CD4-positive, alpha-beta T cell (primary cell): ENCODE measurements at regions of chr17 and their contacts with region 1.

Region 1: GRCh38 chr17:4709794-4710692 is at the start of gene ARRB2:
- DNase-seq: peak; percentile 97 to 100 (median 99)
- ATAC-seq: peak; percentile 79
- H3K4me3 ChIP-seq: peak within 1 kb of the TSS; percentile 90
- H3K4me3 Mint-ChIP-seq: peak within 1 kb of the TSS; percentile 98
- H3K27ac ChIP-seq: peak within 1 kb of the TSS; percentile 82 to 92
- H3K27ac Mint-ChIP-seq: peak within 1 kb of the TSS; percentile 83
- H3K4me1 ChIP-seq: peaks cover 52% of the 10 kb centered on the region
- H3K4me1 Mint-ChIP-seq: peaks cover 59% of the 10 kb centered on the region
- H3K27me3 ChIP-seq: no peaks in the 10 kb centered on the region
- H3K27me3 Mint-ChIP-seq: no peaks in the 10 kb centered on the region
- CTCF ChIP-seq: peak; percentile 86
- total RNA-seq, gene ARRB2: 210 to 220 TPM

Region 2: DNA sequence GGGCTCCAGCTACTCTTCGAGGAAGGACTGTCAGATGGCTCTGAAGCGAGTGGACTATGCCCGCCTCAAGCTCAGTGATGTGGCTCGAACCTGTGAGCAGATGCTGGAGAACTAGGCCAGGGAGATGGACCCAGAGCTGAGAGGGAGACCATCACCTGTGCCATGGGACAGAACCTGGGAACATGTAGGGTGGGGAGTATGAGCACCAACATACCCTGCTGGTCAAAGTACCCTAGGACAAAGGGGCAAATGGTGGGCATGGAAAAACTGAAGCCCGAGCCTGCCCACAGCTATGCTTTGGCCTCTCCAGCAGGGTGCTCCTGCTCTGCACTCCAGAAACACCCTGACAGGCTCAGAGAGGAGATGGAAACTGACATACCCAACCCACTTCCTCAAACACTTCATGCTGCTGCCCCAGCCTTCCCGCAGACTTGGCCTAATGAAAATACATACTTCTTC is 23.1 kb after region 1 on chr17:
- CTCF ChIA-PET with region 1: interaction called, 15 read pairs
- POLR2A ChIA-PET with region 1: interaction called, 13 read pairs
- intact Hi-C with region 1: loop called (anchors 1 kb)
- DNase-seq: peak in 3 of 14 experiments; percentile 42 to 68 (median 55)
- ATAC-seq: no peak
- H3K4me3 ChIP-seq: no peak overlapping the region
- H3K4me3 Mint-ChIP-seq: peak overlapping the region; percentile 1
- H3K27ac ChIP-seq: no peak overlapping the region
- H3K27ac Mint-ChIP-seq: peak overlapping the region; percentile 5
- H3K4me1 ChIP-seq: peaks cover 29% of the 10 kb centered on the region
- H3K4me1 Mint-ChIP-seq: peaks cover 24% of the 10 kb centered on the region
- H3K27me3 ChIP-seq: no peaks in the 10 kb centered on the region
- H3K27me3 Mint-ChIP-seq: no peaks in the 10 kb centered on the region
- CTCF ChIP-seq: no peak

Region 3: GRCh38 chr17:4796553-4796921 is 86.5 kb after region 1 on chr17:
- CTCF ChIA-PET with region 1: interaction called, 6 read pairs
- POLR2A ChIA-PET with region 1: interaction called, 10 read pairs
- intact Hi-C with region 1: loop called in 1 of 2 experiments (anchors 2 kb)
- DNase-seq: peak in 2 of 14 experiments; percentile 19 to 33
- ATAC-seq: no peak
- H3K4me3 ChIP-seq: peak overlapping the region; percentile 69
- H3K4me3 Mint-ChIP-seq: peak overlapping the region; percentile 99
- H3K27ac ChIP-seq: peak overlapping the region; percentile 50 to 56
- H3K27ac Mint-ChIP-seq: peak overlapping the region; percentile 84
- H3K4me1 ChIP-seq: peaks cover 20% of the 10 kb centered on the region
- H3K4me1 Mint-ChIP-seq: peaks cover 15% of the 10 kb centered on the region
- H3K27me3 ChIP-seq: no peaks in the 10 kb centered on the region
- H3K27me3 Mint-ChIP-seq: peaks cover 4% of the 10 kb centered on the region
- CTCF ChIP-seq: no peak

Region 4: GRCh38 chr17:4881761-4882555 is 171.9 kb after region 1 on chr17:
- CTCF ChIA-PET with region 1: interaction called, 16 read pairs
- POLR2A ChIA-PET with region 1: interaction called, 7 read pairs
- intact Hi-C with region 1: loop called (anchors 1 kb)
- DNase-seq: peak; percentile 59 to 83 (median 69)
- ATAC-seq: peak; percentile 97
- H3K4me3 ChIP-seq: no peak overlapping the region
- H3K4me3 Mint-ChIP-seq: no peak overlapping the region
- H3K27ac ChIP-seq: no peak overlapping the region
- H3K27ac Mint-ChIP-seq: no peak overlapping the region
- H3K4me1 ChIP-seq: peaks cover 2% of the 10 kb centered on the region
- H3K4me1 Mint-ChIP-seq: no peaks in the 10 kb centered on the region
- H3K27me3 ChIP-seq: no peaks in the 10 kb centered on the region
- H3K27me3 Mint-ChIP-seq: no peaks in the 10 kb centered on the region
- CTCF ChIP-seq: peak; percentile 90

Region 5: GRCh38 chr17:4939796-4940624 is 230.0 kb after region 1 on chr17 and contains the starts of genes RNF167 and SLC25A11:
- CTCF ChIA-PET with region 1: no interaction called
- POLR2A ChIA-PET with region 1: interaction called, 10 read pairs
- intact Hi-C with region 1: loop called (anchors 5 kb)
- DNase-seq: peak; percentile 91 to 100 (median 95)
- ATAC-seq: peak; percentile 83
- H3K4me3 ChIP-seq: peak within 1 kb of the TSS; percentile 100
- H3K4me3 Mint-ChIP-seq: peak within 1 kb of the TSS; percentile 99
- H3K27ac ChIP-seq: peak within 1 kb of the TSS; percentile 89 to 91
- H3K27ac Mint-ChIP-seq: peak within 1 kb of the TSS; percentile 90
- H3K4me1 ChIP-seq: peaks cover 66% of the 10 kb centered on the region
- H3K4me1 Mint-ChIP-seq: peaks cover 59% of the 10 kb centered on the region
- H3K27me3 ChIP-seq: no peaks in the 10 kb centered on the region
- H3K27me3 Mint-ChIP-seq: no peaks in the 10 kb centered on the region
- CTCF ChIP-seq: no peak
- total RNA-seq, gene RNF167: 59.3 to 62.8 TPM
- total RNA-seq, gene SLC25A11: 20.8 to 21.9 TPM